Activated T-helper 2 cell treated with anti-CD3 and anti-CD28 coated beads, Interferon-gamma antibody, Interleukin-2, Interleukin-4, amounts not matched to agents 10 μg/mL and 5 μg/mL and 100 μg/mL, durations not matched to agents 14 hours and 24 hours and 36 hours (primary cell): ENCODE measurements at regions of chr2 and their contacts with region 1.

Region 1: DNA sequence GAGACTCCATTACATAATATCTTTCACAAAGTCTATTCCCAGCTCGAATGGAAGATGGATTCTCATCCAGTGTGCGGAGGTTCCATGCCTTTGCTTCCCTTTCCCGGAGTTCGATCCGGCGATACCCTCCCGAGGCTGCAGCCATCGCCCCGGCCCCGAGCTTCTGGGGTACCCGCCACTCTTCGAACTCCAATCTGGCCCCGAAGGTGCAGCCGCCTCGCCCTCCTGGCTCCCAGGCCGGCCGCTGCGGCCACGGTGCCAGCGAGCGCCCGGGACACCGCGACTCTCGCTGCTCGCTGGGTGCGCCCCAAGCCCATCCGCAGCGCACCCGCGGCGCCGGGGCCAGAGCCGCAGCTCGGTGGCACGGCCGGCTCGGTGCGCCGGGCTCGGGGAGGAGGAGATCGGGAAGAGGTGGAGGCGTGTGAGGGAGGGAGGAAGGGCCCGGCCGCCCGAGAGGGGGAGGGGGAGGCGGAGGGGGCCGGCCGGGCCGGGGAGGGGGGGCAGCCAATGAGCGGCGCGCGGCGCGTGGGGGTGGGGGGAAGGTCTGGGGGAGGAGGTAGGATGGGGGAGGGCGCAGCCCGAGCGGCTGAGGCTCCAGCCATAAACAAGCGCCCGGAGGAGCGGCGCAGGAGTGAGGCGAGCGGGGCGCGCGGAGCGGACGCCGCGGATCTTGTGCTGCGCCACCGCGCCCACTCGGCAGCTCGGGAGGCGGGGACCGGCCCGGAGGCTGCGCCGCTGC is at the start of gene CRIM1:
- DNase-seq: peak; percentile 39
- H3K4me3 Mint-ChIP-seq: peak within 1 kb of the TSS; percentile 82
- H3K27ac Mint-ChIP-seq: peak within 1 kb of the TSS; percentile 24
- H3K4me1 Mint-ChIP-seq: peaks cover 25% of the 10 kb centered on the region
- H3K27me3 Mint-ChIP-seq: peaks cover 64% of the 10 kb centered on the region
- total RNA-seq, gene CRIM1: 12.4 and 12.8 TPM in 2 replicates

Region 2: GRCh38 chr2:36147670-36148390 is 207.5 kb before region 1 on chr2:
- intact Hi-C with region 1: loop called (anchors 2 kb)
- DNase-seq: no peak
- H3K4me3 Mint-ChIP-seq: no peak overlapping the region
- H3K27ac Mint-ChIP-seq: no peak overlapping the region
- H3K4me1 Mint-ChIP-seq: peaks cover 27% of the 10 kb centered on the region
- H3K27me3 Mint-ChIP-seq: peaks cover 39% of the 10 kb centered on the region

Region 3: DNA sequence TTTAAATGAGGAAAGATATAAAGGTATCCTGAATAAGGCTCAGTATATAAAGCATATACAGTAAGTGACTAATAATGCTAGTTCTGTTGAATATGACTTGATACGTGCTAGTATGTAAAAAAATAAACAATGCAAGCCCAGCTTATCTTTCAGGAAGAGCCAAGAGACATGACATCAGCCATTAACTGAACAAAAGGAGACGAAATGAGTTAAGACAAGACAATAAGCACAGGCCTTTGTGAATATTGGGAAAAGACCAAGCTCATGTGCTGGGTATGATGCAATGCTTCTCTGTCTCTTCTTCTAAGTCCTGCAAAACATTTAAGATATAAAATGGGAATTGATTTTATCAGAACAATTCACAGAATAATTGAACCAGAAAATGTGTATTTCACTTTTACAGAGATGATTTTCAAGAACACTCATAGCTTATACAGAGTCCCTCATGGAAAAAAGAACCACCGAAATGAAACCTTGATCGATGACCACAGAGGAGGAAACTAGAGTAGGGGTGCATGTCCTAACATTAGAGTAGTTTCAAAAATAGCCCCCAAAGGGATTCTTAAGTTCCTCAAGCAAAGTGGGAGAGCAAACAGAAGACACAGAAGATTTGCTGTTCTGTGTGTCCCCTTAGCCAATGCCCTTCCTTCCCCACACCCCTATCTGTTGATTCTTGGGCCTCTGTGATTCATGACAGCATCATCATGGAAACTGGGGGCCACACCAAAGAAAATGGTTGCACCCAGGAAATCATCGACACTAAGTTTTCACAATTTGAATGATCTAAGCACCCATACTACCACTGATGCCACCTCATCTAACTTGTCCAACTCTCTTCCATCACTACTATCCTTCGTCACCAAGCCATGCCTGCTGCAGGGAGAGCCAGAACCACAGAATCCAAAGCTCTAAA is 67.7 kb before region 1 on chr2:
- intact Hi-C with region 1: loop called (anchors 5 kb)
- DNase-seq: no peak
- H3K4me3 Mint-ChIP-seq: no peak overlapping the region
- H3K27ac Mint-ChIP-seq: peak overlapping the region; percentile 68
- H3K4me1 Mint-ChIP-seq: peaks cover 12% of the 10 kb centered on the region
- H3K27me3 Mint-ChIP-seq: no peaks in the 10 kb centered on the region

Region 4: GRCh38 chr2:36403675-36404230 is 48.4 kb after region 1 on chr2:
- intact Hi-C with region 1: loop called (anchors 5 kb)
- DNase-seq: no peak
- H3K4me3 Mint-ChIP-seq: no peak overlapping the region
- H3K27ac Mint-ChIP-seq: no peak overlapping the region
- H3K4me1 Mint-ChIP-seq: no peaks in the 10 kb centered on the region
- H3K27me3 Mint-ChIP-seq: no peaks in the 10 kb centered on the region

Region 5: DNA sequence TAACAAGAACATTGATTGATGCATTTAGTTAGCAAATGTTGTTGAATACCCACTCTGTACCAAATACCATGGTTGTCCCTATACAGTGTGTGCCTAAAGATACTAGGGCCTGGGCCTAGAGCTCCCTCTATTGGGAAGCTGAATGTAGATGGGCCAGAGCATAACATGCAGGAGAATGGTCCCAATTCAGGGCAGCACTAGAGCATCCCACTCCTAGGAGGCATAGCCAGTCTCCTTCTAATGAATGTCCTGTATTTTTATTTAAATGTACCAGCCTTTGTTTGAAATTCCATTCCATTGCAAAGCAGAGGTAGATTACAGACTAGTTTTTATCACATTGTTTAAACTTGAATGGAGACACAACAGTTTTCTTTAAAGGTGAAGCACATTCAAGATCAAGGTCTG is 152.1 kb after region 1 on chr2:
- intact Hi-C with region 1: loop called (anchors 2 kb)
- DNase-seq: no peak
- H3K4me3 Mint-ChIP-seq: no peak overlapping the region
- H3K27ac Mint-ChIP-seq: no peak overlapping the region
- H3K4me1 Mint-ChIP-seq: no peaks in the 10 kb centered on the region
- H3K27me3 Mint-ChIP-seq: no peaks in the 10 kb centered on the region

Region 6: GRCh38 chr2:36663851-36664695 is 308.8 kb after region 1 on chr2:
- intact Hi-C with region 1: loop called (anchors 1 kb)
- DNase-seq: no peak
- H3K4me3 Mint-ChIP-seq: no peak overlapping the region
- H3K27ac Mint-ChIP-seq: no peak overlapping the region
- H3K4me1 Mint-ChIP-seq: no peaks in the 10 kb centered on the region
- H3K27me3 Mint-ChIP-seq: peaks cover 5% of the 10 kb centered on the region

Region 7: GRCh38 chr2:37388074-37388473 is 1032.8 kb after region 1 on chr2:
- intact Hi-C with region 1: no loop called
- DNase-seq: no peak
- H3K4me3 Mint-ChIP-seq: no peak overlapping the region
- H3K27ac Mint-ChIP-seq: no peak overlapping the region
- H3K4me1 Mint-ChIP-seq: peaks cover 16% of the 10 kb centered on the region
- H3K27me3 Mint-ChIP-seq: no peaks in the 10 kb centered on the region